ENCODE measurements at regions of chr22 and their contacts with region 1.

Region 1: GRCh38 chr22:31211862-31212730 is at the start of gene LIMK2:
- DNase-seq: no peak
- H3K4me3 ChIP-seq: peak within 1 kb of the TSS; percentile 79
- CTCF ChIP-seq: peak; percentile 95

Region 2: GRCh38 chr22:31107178-31107893 is 104.8 kb before region 1 on chr22 and contains the start of gene SELENOM:
- CTCF ChIA-PET with region 1: interaction called, 16 read pairs
- POLR2A ChIA-PET with region 1: interaction called, 3 read pairs
- DNase-seq: peak; percentile 88
- H3K4me3 ChIP-seq: peak within 1 kb of the TSS; percentile 97
- CTCF ChIP-seq: peak; percentile 97

Region 3: GRCh38 chr22:31173386-31174145 is 38.5 kb before region 1 on chr22:
- CTCF ChIA-PET with region 1: interaction called, 26 read pairs
- POLR2A ChIA-PET with region 1: no interaction called
- DNase-seq: peak; percentile 57
- H3K4me3 ChIP-seq: no peak overlapping the region
- CTCF ChIP-seq: no peak

Region 4: GRCh38 chr22:31192513-31192912 is 19.6 kb before region 1 on chr22:
- CTCF ChIA-PET with region 1: interaction called, 79 read pairs
- POLR2A ChIA-PET with region 1: no interaction called
- DNase-seq: peak; percentile 28
- H3K4me3 ChIP-seq: no peak overlapping the region
- CTCF ChIP-seq: no peak

Region 5: DNA sequence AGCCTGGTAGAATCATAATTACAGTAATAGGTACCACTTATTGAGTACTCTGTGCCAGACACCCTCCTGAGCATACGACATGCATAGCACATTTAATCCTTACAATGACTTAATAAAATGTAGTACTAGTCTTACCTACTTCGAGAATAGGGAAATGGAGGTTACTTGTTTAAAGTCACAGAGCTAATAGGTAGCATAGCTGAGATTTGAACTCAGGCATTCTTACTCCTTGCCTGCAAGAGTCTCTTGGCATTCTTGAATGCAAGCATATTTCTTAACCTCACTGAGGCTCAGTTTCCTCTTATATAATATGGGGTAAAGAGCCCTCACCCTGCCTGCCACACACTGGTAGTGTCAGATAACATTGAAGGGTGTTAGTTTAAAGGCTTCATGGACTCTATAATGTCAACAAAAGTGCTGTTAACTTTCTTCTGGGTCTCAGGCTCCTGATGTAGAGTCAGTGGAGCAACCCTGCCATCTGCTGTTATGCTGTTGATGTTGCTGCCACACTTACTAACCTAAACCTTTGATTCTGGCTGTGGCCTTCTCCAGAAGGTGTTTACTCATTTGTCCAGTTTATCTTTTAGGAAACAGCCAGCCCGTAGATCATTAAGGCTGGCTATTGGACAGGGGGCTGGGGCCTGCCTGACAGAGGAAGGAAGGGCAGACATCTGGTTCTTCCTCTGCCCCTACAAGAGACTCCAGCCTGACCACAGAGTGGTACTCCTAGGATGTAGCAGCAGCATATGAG is 18.9 kb after region 1 on chr22:
- CTCF ChIA-PET with region 1: interaction called, 201 read pairs
- POLR2A ChIA-PET with region 1: no interaction called
- DNase-seq: no peak
- H3K4me3 ChIP-seq: no peak overlapping the region
- CTCF ChIP-seq: peak; percentile 68

Region 6: DNA sequence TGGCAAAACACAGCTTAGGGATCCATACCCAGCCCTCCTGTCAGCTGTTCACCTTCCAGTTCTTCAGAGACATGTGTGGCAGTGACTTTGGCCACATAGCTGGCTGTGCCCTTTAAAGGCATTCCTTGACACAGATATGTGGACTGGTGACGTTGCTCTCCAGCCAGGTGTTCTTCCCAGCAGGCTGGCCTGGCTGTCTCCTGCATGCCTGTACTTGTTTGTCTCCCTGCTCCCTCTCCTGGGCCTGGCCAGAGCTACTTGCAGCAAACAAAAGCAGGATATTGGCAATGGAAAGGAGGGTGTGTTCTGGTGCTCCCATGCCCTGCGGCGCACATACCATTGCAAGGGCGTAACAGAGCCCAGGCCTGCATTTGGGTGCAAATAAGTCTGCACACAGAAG is 41.9 kb after region 1 on chr22:
- CTCF ChIA-PET with region 1: interaction called, 21 read pairs
- POLR2A ChIA-PET with region 1: no interaction called
- DNase-seq: no peak
- H3K4me3 ChIP-seq: no peak overlapping the region
- CTCF ChIP-seq: no peak

Region 7: GRCh38 chr22:31290494-31291471 is 78.7 kb after region 1 on chr22:
- CTCF ChIA-PET with region 1: interaction called, 19 read pairs
- POLR2A ChIA-PET with region 1: no interaction called
- DNase-seq: no peak
- H3K4me3 ChIP-seq: peak overlapping the region; percentile 56
- CTCF ChIP-seq: no peak

Measured in AG04449 (cell line).